Naive thymus-derived CD4-positive, alpha-beta T cell (primary cell): ENCODE measurements at regions of chrX and their contacts with region 1.

Region 1: GRCh38 chrX:55160685-55161552 is 59.2 kb upstream of the PAGE5 start:
- DNase-seq: peak; percentile 77 to 92 (median 89)
- ATAC-seq: peak; percentile 95
- H3K4me3 ChIP-seq: peak overlapping the region; percentile 83
- H3K4me3 Mint-ChIP-seq: peak overlapping the region; percentile 85 to 98 (median 93)
- H3K27ac ChIP-seq: peak overlapping the region; percentile 95
- H3K27ac Mint-ChIP-seq: peak overlapping the region; percentile 91 to 99 (median 98)
- H3K4me1 ChIP-seq: peaks cover 0 to 3% of the 10 kb centered on the region in 2 donors
- H3K4me1 Mint-ChIP-seq: peaks cover 3 to 13% (median 10%) of the 10 kb centered on the region in 7 donors
- H3K27me3 ChIP-seq: no peaks in the 10 kb centered on the region
- H3K27me3 Mint-ChIP-seq: peaks cover 0 to 9% (median 0%) of the 10 kb centered on the region in 5 donors

Region 2: DNA sequence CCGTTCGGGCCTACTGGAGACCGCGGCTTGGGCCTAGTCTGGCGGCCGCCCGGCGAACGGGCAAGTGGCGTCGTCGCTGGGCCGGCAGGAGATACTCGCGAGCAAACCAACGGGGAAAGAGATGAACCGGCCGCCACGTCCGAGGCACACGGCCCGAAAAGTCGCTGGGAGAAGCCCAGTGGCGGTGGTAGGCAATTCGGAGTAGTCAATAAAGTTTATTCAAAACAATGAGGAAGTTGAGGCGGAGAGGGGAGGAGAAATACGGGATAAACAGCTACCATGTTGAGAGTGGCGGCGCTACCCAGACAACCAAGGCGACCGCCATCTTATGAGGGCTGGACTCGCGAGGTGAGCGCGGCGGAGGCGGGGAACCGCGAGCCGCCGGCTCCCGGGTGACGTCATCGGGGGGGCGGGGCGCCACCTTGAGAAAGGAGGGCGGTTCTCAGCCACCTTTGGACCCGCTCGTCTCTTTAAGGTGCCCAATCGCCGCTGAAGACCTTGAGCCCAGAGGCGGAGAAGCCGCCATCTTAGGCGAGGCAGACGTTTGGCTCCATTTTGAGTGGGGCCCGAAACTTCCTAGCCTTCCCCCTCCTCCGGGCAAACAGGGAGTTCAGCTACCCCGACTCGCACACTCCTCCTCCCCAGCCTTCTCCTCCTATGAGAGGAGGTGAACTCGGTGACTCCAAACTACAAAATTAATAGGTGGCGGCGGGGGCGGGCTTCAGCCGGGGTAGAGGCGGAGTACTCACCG is 1116.6 kb before region 1 on chrX and contains the start of gene PHF8:
- CTCF ChIA-PET with region 1: no interaction called
- POLR2A ChIA-PET with region 1: interaction called, 3 read pairs
- intact Hi-C with region 1: loop called (anchors 1 to 2 kb)
- DNase-seq: peak; percentile 84 to 96 (median 94)
- ATAC-seq: peak; percentile 90
- H3K4me3 ChIP-seq: peak within 1 kb of the TSS; percentile 80
- H3K4me3 Mint-ChIP-seq: peak within 1 kb of the TSS; percentile 84 to 96 (median 94)
- H3K27ac ChIP-seq: peak within 1 kb of the TSS; percentile 95
- H3K27ac Mint-ChIP-seq: peak within 1 kb of the TSS; percentile 93 to 99 (median 97)
- H3K4me1 ChIP-seq: peaks cover 9% of the 10 kb centered on the region in 2 donors
- H3K4me1 Mint-ChIP-seq: peaks cover 8 to 33% (median 17%) of the 10 kb centered on the region in 7 donors
- H3K27me3 ChIP-seq: no peaks in the 10 kb centered on the region
- H3K27me3 Mint-ChIP-seq: no peaks in the 10 kb centered on the region
- total RNA-seq, gene PHF8: 48.5 to 80.2 (median 54.5) TPM

Region 3: GRCh38 chrX:54529552-54530357 is 631.2 kb before region 1 on chrX and contains the start of gene GNL3L:
- CTCF ChIA-PET with region 1: no interaction called
- POLR2A ChIA-PET with region 1: interaction called, 3 read pairs
- intact Hi-C with region 1: loop called (anchors 1 kb)
- DNase-seq: peak; percentile 58 to 84 (median 76)
- ATAC-seq: peak; percentile 93
- H3K4me3 ChIP-seq: peak within 1 kb of the TSS; percentile 82
- H3K4me3 Mint-ChIP-seq: peak within 1 kb of the TSS; percentile 87 to 97 (median 94)
- H3K27ac ChIP-seq: peak within 1 kb of the TSS; percentile 82
- H3K27ac Mint-ChIP-seq: peak within 1 kb of the TSS; percentile 87 to 99 (median 93)
- H3K4me1 ChIP-seq: peaks cover 17 to 30% of the 10 kb centered on the region in 2 donors
- H3K4me1 Mint-ChIP-seq: peaks cover 10 to 46% (median 32%) of the 10 kb centered on the region in 7 donors
- H3K27me3 ChIP-seq: no peaks in the 10 kb centered on the region
- H3K27me3 Mint-ChIP-seq: no peaks in the 10 kb centered on the region
- total RNA-seq, gene GNL3L: 32.8 to 55.4 (median 41.8) TPM

Region 4: DNA sequence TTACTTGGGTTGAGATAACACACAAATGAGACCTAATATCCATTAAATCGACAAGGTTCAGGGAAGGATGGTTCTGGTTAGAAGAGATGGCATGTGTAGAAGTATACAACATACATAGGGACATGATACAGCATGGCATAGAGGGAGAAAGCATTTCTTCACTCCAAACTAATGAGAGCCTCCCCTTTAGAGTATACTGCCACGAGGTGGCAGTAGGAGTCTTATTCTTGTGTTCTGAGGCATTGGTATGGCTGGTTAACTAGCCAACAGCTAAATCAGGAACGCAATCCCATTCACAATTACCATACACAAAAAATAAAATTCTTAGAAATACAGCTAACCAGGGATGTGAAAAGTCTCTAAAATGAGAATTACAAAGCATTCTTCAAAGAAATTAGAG is 269.3 kb before region 1 on chrX:
- CTCF ChIA-PET with region 1: no interaction called
- POLR2A ChIA-PET with region 1: interaction called, 5 read pairs
- intact Hi-C with region 1: loop called (anchors 1 kb)
- DNase-seq: peak in 7 of 9 donors; percentile 11 to 54 (median 40)
- ATAC-seq: peak; percentile 60
- H3K4me3 ChIP-seq: no peak overlapping the region
- H3K4me3 Mint-ChIP-seq: no peak overlapping the region
- H3K27ac ChIP-seq: no peak overlapping the region
- H3K27ac Mint-ChIP-seq: no peak overlapping the region
- H3K4me1 ChIP-seq: no peaks in the 10 kb centered on the region
- H3K4me1 Mint-ChIP-seq: peaks cover 0 to 1% (median 0%) of the 10 kb centered on the region in 7 donors
- H3K27me3 ChIP-seq: no peaks in the 10 kb centered on the region
- H3K27me3 Mint-ChIP-seq: peaks cover 0 to 9% (median 4%) of the 10 kb centered on the region in 5 donors

Region 5: DNA sequence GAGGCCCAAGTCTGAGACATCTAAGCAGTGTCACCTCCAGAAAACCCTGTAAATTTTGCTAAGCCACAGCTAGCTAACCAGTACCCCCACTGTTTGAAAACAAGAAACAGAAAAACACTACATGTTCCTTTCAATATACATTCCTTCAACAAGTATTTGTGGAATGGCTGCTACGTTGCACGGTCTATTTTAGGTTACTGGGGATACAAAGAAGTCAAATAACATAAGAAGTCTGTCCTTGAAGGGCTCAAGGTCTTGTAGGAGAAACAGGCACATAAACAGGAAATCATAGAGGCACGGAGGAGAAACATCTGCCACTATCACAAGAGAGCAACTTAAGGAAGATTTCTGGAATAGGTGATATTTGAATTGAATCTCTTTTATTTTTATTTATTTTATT is 115.2 kb before region 1 on chrX:
- CTCF ChIA-PET with region 1: no interaction called
- POLR2A ChIA-PET with region 1: no interaction called
- intact Hi-C with region 1: no loop called
- DNase-seq: no peak
- ATAC-seq: no peak
- H3K4me3 ChIP-seq: no peak overlapping the region
- H3K4me3 Mint-ChIP-seq: no peak overlapping the region
- H3K27ac ChIP-seq: no peak overlapping the region
- H3K27ac Mint-ChIP-seq: no peak overlapping the region
- H3K4me1 ChIP-seq: no peaks in the 10 kb centered on the region
- H3K4me1 Mint-ChIP-seq: peaks cover 0 to 3% (median 0%) of the 10 kb centered on the region in 7 donors
- H3K27me3 ChIP-seq: no peaks in the 10 kb centered on the region
- H3K27me3 Mint-ChIP-seq: no peaks in the 10 kb centered on the region

Region 6: GRCh38 chrX:55135171-55135570 is 25.7 kb before region 1 on chrX:
- CTCF ChIA-PET with region 1: no interaction called
- POLR2A ChIA-PET with region 1: no interaction called
- intact Hi-C with region 1: loop called (anchors 1 kb)
- DNase-seq: peak in 7 of 9 donors; percentile 3 to 45 (median 17)
- ATAC-seq: no peak
- H3K4me3 ChIP-seq: no peak overlapping the region
- H3K4me3 Mint-ChIP-seq: no peak overlapping the region
- H3K27ac ChIP-seq: no peak overlapping the region
- H3K27ac Mint-ChIP-seq: no peak overlapping the region
- H3K4me1 ChIP-seq: no peaks in the 10 kb centered on the region
- H3K4me1 Mint-ChIP-seq: peaks cover 0 to 5% (median 0%) of the 10 kb centered on the region in 7 donors
- H3K27me3 ChIP-seq: no peaks in the 10 kb centered on the region
- H3K27me3 Mint-ChIP-seq: no peaks in the 10 kb centered on the region

Region 7: DNA sequence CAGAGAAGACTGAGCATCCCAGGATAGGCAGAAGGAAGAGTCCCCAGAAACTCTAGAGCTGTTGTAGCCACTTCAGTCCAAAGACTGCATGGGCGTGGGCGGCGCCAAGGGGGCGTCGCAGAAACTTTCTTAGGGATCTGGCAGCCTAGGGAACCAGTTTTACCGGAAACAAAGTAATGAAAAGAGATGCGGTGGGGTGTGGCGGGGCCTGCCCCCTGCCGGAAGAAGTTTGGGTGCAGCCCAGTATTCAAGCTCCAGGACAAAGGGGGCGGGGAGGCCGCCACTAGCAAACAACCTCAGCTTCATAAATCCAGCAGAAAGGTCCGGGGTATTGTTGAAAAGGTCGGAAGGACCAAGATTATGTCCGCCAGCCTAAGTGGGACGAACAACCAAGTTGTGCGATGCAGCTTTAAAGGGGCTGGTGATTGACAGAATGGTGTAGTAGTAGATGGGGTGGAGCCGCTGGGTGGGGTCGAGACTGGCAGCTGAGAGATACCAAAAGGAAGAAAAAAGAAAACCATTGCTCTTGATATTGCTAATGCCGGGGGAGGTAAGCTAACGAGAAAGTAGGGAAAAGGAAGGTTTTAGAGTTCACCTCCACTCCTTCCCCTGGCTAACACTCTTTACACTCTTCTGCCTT is 747.2 kb after region 1 on chrX:
- CTCF ChIA-PET with region 1: no interaction called
- POLR2A ChIA-PET with region 1: no interaction called
- intact Hi-C with region 1: loop called in 1 of 2 experiments (anchors 2 kb)
- DNase-seq: peak; percentile 7 to 50 (median 44)
- ATAC-seq: peak; percentile 80
- H3K4me3 ChIP-seq: peak overlapping the region; percentile 83
- H3K4me3 Mint-ChIP-seq: peak overlapping the region; percentile 80 to 97 (median 94)
- H3K27ac ChIP-seq: peak overlapping the region; percentile 61
- H3K27ac Mint-ChIP-seq: peak overlapping the region; percentile 53 to 93 (median 85)
- H3K4me1 ChIP-seq: no peaks in the 10 kb centered on the region
- H3K4me1 Mint-ChIP-seq: peaks cover 6 to 32% (median 16%) of the 10 kb centered on the region in 7 donors
- H3K27me3 ChIP-seq: no peaks in the 10 kb centered on the region
- H3K27me3 Mint-ChIP-seq: no peaks in the 10 kb centered on the region

Region 8: DNA sequence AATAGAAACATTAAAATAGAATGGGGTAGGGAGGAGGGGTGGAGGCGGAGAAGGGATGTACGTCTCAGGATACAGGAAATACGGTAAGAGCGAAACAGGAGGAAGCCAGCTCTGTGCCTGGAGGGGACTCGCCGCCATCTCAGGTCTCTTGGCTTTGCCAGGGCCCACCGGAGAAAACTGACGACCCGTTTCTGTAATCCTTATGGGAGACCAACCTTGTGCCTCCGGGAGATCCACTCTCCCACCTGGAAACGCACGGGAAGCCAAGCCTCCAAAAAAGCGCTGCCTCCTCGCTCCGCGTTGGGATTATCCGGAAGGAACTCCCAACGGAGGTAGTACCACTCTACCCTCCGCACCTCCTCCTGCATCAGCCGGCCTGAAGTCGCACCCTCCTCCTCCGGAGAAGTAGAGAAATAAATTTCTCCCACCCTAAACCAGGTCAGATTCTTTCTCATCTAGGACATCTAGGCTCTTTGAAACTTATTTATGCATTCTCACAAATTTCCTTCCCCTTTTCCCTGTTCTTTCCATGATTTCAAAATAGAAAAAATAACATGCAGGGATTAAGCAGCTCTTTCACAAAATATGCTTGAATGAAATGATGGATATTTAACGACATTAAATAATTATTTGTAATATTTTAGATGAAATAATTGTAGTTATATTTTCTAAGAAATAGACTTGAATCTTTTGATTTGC is 1568.4 kb after region 1 on chrX and contains the start of gene NBDY:
- CTCF ChIA-PET with region 1: no interaction called
- POLR2A ChIA-PET with region 1: no interaction called
- intact Hi-C with region 1: loop called in 1 of 2 experiments (anchors 2 kb)
- DNase-seq: peak in 7 of 9 donors; percentile 21 to 55 (median 40)
- ATAC-seq: peak; percentile 84
- H3K4me3 ChIP-seq: peak within 1 kb of the TSS; percentile 94
- H3K4me3 Mint-ChIP-seq: peak within 1 kb of the TSS; percentile 80 to 96 (median 90)
- H3K27ac ChIP-seq: peak within 1 kb of the TSS; percentile 95
- H3K27ac Mint-ChIP-seq: peak within 1 kb of the TSS; percentile 89 to 96 (median 95)
- H3K4me1 ChIP-seq: peaks cover 0 to 3% of the 10 kb centered on the region in 2 donors
- H3K4me1 Mint-ChIP-seq: peaks cover 3 to 43% (median 34%) of the 10 kb centered on the region in 7 donors
- H3K27me3 ChIP-seq: no peaks in the 10 kb centered on the region
- H3K27me3 Mint-ChIP-seq: no peaks in the 10 kb centered on the region
- total RNA-seq, gene NBDY: 24.9 to 45.8 (median 31.7) TPM